ENCODE measurements at regions of chr15 and their contacts with region 1.

Region 1: GRCh38 chr15:39782441-39783138 is at the start of gene FSIP1:
- DNase-seq: peak; percentile 93
- ATAC-seq: peak; percentile 99
- H3K4me3 ChIP-seq: peak within 1 kb of the TSS; percentile 74 to 92 (median 86)
- H3K27ac ChIP-seq: peak within 1 kb of the TSS; percentile 37
- H3K4me1 ChIP-seq: peaks cover 41% of the 10 kb centered on the region
- H3K27me3 ChIP-seq: no peaks in the 10 kb centered on the region; a peak in 2 of 5 replicates
- CTCF ChIP-seq: no peak
- EP300 ChIP-seq: no peak
- POLR2A ChIP-seq: peak; percentile 75 to 88
- RAD21 ChIP-seq: 0 out of 2 replicates have a peak, but pooled peaks have one; percentile 20
- total RNA-seq, gene FSIP1: 0.11 and 0.18 TPM in 2 replicates

Region 2: DNA sequence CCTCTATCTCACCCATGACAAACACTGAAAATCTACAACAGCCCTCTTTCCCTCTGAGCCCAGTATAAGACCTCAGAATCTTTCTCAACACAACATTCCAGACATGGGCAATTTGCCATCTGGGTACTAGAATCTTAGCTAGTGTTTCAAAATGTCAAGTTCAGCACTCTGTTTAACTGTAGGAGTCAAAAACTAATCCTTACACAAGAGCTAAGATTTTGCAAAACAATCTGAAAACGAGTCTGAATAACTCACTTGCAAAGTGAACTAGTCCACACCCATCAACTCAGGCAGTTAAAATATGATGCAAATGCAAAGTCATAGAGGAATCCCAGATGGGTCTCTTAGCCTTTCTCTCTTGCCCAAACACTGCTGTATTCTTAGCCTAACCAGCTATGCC is 69.7 kb after region 1 on chr15:
- CTCF ChIA-PET with region 1: no interaction called
- POLR2A ChIA-PET with region 1: no interaction called
- in situ Hi-C with region 1: no loop called
- intact Hi-C with region 1: no loop called
- DNase-seq: no peak
- ATAC-seq: no peak
- H3K4me3 ChIP-seq: no peak overlapping the region
- H3K27ac ChIP-seq: no peak overlapping the region
- H3K4me1 ChIP-seq: no peaks in the 10 kb centered on the region
- H3K27me3 ChIP-seq: no peaks in the 10 kb centered on the region; a peak in 1 of 5 replicates
- CTCF ChIP-seq: no peak
- EP300 ChIP-seq: no peak
- POLR2A ChIP-seq: no peak
- RAD21 ChIP-seq: no peak

Region 3: DNA sequence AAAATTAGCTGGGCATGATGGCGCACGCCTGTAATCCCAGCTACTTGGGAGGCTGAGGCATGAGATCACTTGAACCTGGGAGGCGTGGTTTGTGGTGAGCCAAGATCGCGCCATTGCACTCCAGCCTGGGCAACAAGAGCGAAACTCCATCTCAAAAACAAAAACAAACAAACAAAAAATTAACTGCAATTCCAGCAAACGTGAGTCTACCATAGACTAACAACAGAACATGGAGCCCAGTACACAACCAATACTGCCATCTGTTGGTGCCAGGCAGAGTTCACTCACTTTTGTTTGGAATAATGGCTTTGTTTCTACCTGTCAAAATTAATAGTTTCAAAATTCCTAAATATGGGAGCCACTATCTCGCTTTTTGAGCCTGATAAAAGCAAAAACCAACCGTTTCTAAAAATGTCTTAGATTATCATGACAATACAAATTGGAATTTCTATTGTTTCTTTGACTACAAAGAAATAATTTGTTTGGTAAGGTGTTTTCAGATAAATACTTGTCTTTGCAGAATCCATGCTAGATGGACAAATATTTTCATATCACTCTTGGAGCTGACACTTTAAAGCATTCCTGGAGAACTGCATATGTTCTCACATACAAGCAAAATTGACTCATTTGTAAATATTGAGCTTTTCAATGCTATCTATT is 92.4 kb after region 1 on chr15:
- CTCF ChIA-PET with region 1: interaction called, 16 read pairs
- POLR2A ChIA-PET with region 1: no interaction called
- in situ Hi-C with region 1: loop called (anchors 5 kb)
- intact Hi-C with region 1: loop called (anchors 1 kb)
- DNase-seq: peak; percentile 17
- ATAC-seq: peak; percentile 57; the same call in 2 of the 3 replicates
- H3K4me3 ChIP-seq: no peak overlapping the region
- H3K27ac ChIP-seq: no peak overlapping the region
- H3K4me1 ChIP-seq: no peaks in the 10 kb centered on the region
- H3K27me3 ChIP-seq: no peaks in the 10 kb centered on the region
- CTCF ChIP-seq: peak; percentile 71
- EP300 ChIP-seq: no peak
- POLR2A ChIP-seq: no peak
- RAD21 ChIP-seq: no peak

Region 4: DNA sequence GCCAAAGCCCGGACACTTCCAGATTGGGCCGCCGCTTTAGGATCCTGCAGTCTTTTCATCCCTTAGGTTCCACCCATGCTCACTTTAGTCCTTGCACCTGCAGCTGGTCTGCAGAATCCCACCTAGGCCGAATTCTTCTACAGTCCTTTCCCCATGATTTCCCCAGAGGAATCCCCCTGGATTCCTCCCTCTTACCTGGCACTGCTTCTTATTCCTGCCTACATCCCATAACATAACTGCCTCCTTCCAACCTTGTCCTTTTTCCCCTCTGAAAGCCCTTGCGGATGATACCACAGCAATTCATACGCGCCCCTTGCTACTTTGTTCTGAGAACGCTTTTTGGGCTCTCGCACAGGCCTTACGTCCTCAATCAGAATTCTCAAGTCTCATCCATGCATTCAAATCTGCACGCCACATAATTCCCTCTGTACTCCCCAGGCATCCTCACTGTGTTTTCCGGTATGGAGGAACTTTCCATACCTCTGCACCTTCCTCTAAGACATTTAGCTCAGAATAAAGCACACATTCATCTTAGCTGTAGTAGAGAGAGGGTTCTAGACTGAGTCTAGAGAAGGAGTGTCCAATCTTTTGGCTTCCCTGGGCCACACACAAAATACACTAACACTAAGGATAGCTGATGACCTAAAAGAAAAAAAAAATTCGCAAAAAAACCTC is 151.9 kb after region 1 on chr15:
- CTCF ChIA-PET with region 1: no interaction called
- POLR2A ChIA-PET with region 1: interaction called, 10 read pairs
- in situ Hi-C with region 1: no loop called
- intact Hi-C with region 1: loop called (anchors 2 kb)
- DNase-seq: peak; percentile 9
- ATAC-seq: peak; percentile 56
- H3K4me3 ChIP-seq: peak overlapping the region; percentile 84 to 88 (median 87)
- H3K27ac ChIP-seq: peak overlapping the region; percentile 68
- H3K4me1 ChIP-seq: peaks cover 40% of the 10 kb centered on the region
- H3K27me3 ChIP-seq: peaks cover 3 to 8% of the 10 kb centered on the region in 2 experiments; a peak in 4 of 5 replicates
- CTCF ChIP-seq: no peak
- EP300 ChIP-seq: 0 out of 4 replicates have a peak, but pooled peaks of 1 of the 2 experiments have one; percentile 1
- POLR2A ChIP-seq: no peak
- RAD21 ChIP-seq: no peak

Region 5: DNA sequence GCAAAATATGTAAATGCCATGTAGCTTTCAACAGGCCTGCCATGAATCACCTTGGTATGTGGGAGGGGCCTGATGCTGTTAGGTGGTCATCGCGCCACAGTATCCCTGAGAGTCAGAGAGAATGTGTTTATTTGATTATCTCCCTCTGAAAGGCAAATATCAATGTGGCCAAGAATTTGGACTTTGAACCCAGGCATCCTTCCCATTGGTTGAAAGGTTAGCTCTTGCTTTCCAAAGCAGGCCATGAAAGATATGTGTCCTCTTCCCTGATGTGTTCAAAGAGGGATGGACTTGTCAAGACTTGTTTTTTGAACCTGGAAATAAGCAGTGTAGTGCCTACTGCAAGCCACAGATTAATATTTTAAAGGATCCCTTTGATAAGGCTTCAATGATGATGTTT is 219.7 kb after region 1 on chr15:
- CTCF ChIA-PET with region 1: no interaction called
- POLR2A ChIA-PET with region 1: interaction called, 10 read pairs
- in situ Hi-C with region 1: no loop called
- intact Hi-C with region 1: no loop called
- DNase-seq: peak; percentile 99
- ATAC-seq: peak; percentile 99
- H3K4me3 ChIP-seq: peak overlapping the region; percentile 52 to 63 (median 57); a peak in 5 of 6 replicates
- H3K27ac ChIP-seq: peak overlapping the region; percentile 89
- H3K4me1 ChIP-seq: peaks cover 57% of the 10 kb centered on the region
- H3K27me3 ChIP-seq: no peaks in the 10 kb centered on the region
- CTCF ChIP-seq: 0 out of 2 replicates have a peak, but pooled peaks have one; percentile 3
- EP300 ChIP-seq: peak in 1 of 2 experiments; percentile 83; a peak in 2 of 4 replicates
- POLR2A ChIP-seq: peak; percentile 47 to 65; a peak in 3 of 4 replicates
- RAD21 ChIP-seq: peak; percentile 24; the same call in 1 of the 2 replicates

Region 6: GRCh38 chr15:40029979-40030893 is 247.6 kb after region 1 on chr15:
- CTCF ChIA-PET with region 1: no interaction called
- POLR2A ChIA-PET with region 1: no interaction called
- in situ Hi-C with region 1: no loop called
- intact Hi-C with region 1: loop called (anchors 5 kb)
- DNase-seq: peak; percentile 50
- ATAC-seq: peak; percentile 89
- H3K4me3 ChIP-seq: no peak overlapping the region
- H3K27ac ChIP-seq: no peak overlapping the region
- H3K4me1 ChIP-seq: no peaks in the 10 kb centered on the region
- H3K27me3 ChIP-seq: no peaks in the 10 kb centered on the region
- CTCF ChIP-seq: peak; percentile 67
- EP300 ChIP-seq: no peak
- POLR2A ChIP-seq: no peak
- RAD21 ChIP-seq: peak; percentile 50

Measured in HepG2 (cell line).